ENCODE measurements at regions of chr5 and their contacts with region 1.

Region 1: GRCh38 chr5:74945561-74946165 is 79.5 kb upstream of the FAM169A start:
- DNase-seq: no peak
- ATAC-seq: no peak
- H3K4me3 ChIP-seq: no peak overlapping the region
- H3K27ac ChIP-seq: no peak overlapping the region
- H3K4me1 ChIP-seq: peaks cover 65% of the 10 kb centered on the region
- H3K27me3 ChIP-seq: no peaks in the 10 kb centered on the region
- CTCF ChIP-seq: no peak
- EP300 ChIP-seq: no peak
- POLR2A ChIP-seq: no peak
- RAD21 ChIP-seq: no peak

Region 2: DNA sequence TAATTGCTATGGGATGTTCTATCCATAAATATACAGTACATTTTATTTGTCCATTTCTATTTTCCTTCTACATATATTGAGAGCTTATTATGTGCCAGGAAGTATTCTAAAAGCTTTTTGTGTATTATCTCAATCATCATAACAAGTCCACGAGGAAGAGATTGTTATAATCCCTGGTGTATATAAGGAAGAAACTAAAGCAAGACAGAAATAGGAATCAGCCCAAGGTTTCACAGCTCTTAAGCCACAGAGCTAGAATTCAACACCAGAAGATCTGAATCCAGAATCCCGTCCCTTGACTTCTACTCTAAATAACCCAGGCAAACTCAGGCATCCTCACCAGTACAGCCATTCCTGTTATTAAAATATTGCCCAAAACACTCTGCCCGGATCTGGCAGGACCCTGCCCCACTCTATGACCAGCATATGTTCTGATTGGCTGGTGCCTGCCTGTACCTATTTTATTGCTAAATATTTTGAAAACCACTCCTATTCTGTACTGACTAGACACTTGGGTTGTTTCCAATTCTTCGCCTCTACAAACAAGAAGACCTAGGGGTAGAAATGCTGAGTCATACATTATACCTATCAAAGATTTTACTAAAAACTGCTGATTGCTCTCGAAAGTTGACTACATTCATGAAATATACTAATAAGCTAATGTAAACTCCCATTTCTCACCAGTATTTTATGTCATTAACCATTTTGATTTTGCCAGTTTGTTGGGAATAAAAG is 602.5 kb before region 1 on chr5:
- CTCF ChIA-PET with region 1: no interaction called
- POLR2A ChIA-PET with region 1: no interaction called
- in situ Hi-C with region 1: no loop called
- intact Hi-C with region 1: no loop called
- DNase-seq: no peak
- ATAC-seq: no peak
- H3K4me3 ChIP-seq: no peak overlapping the region
- H3K27ac ChIP-seq: no peak overlapping the region
- H3K4me1 ChIP-seq: 0 out of 2 replicates have a peak, but pooled peaks cover 6% of the 10 kb centered on the region
- H3K27me3 ChIP-seq: no peaks in the 10 kb centered on the region; a peak in 3 of 5 replicates
- CTCF ChIP-seq: no peak
- EP300 ChIP-seq: no peak
- POLR2A ChIP-seq: no peak
- RAD21 ChIP-seq: no peak

Region 3: DNA sequence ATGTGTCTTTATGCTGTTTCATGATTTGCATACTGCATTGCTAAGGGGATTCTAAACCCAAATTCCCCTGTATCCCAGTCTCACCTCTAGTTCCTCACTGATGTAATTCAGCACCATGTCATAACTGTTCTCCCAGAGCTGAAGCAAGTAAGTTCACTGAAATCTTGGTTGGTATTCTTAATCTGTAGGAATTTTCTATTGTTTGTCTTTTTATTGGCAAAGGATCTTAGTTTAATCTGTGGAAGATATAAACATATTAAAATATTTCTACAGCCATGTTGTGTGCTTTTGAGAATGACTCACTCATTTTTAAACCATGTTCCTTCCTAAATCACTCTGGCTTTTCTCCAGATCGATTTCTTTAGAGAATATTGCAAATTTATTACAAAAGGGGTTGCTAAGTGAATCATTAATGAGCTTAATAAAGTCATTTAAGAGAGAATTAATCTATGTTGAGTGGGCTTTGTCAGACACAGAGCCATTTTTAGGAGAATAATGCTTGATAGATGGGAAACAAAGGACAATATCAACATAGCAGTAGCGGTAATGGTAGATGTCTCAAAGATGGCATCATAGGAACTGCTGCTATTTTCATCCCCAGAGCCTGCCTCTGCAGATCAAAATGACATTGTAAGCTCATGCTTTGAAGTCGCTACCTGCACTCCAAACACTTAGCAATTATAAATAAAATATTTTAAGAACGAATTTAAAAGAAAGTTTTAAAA is 415.2 kb before region 1 on chr5:
- CTCF ChIA-PET with region 1: no interaction called
- POLR2A ChIA-PET with region 1: no interaction called
- in situ Hi-C with region 1: no loop called
- intact Hi-C with region 1: no loop called
- DNase-seq: no peak
- ATAC-seq: no peak
- H3K4me3 ChIP-seq: no peak overlapping the region
- H3K27ac ChIP-seq: no peak overlapping the region
- H3K4me1 ChIP-seq: no peaks in the 10 kb centered on the region
- H3K27me3 ChIP-seq: no peaks in the 10 kb centered on the region
- CTCF ChIP-seq: no peak
- EP300 ChIP-seq: no peak
- POLR2A ChIP-seq: no peak
- RAD21 ChIP-seq: no peak

Region 4: GRCh38 chr5:74673011-74673790 is 272.5 kb before region 1 on chr5:
- CTCF ChIA-PET with region 1: interaction called, 7 read pairs
- POLR2A ChIA-PET with region 1: no interaction called
- in situ Hi-C with region 1: no loop called
- intact Hi-C with region 1: loop called (anchors 10 kb)
- DNase-seq: peak; percentile 29
- ATAC-seq: peak; percentile 47
- H3K4me3 ChIP-seq: no peak overlapping the region
- H3K27ac ChIP-seq: no peak overlapping the region
- H3K4me1 ChIP-seq: peaks cover 52% of the 10 kb centered on the region
- H3K27me3 ChIP-seq: no peaks in the 10 kb centered on the region
- CTCF ChIP-seq: peak; percentile 58
- EP300 ChIP-seq: no peak
- POLR2A ChIP-seq: no peak
- RAD21 ChIP-seq: peak; percentile 45; the same call in 1 of the 2 replicates

Region 5: GRCh38 chr5:74895906-74896305 is 49.8 kb before region 1 on chr5:
- CTCF ChIA-PET with region 1: no interaction called
- POLR2A ChIA-PET with region 1: no interaction called
- in situ Hi-C with region 1: no loop called
- intact Hi-C with region 1: no loop called
- DNase-seq: no peak
- ATAC-seq: no peak
- H3K4me3 ChIP-seq: no peak overlapping the region
- H3K27ac ChIP-seq: no peak overlapping the region
- H3K4me1 ChIP-seq: no peaks in the 10 kb centered on the region
- H3K27me3 ChIP-seq: no peaks in the 10 kb centered on the region
- CTCF ChIP-seq: no peak
- EP300 ChIP-seq: no peak
- POLR2A ChIP-seq: no peak
- RAD21 ChIP-seq: no peak

Measured in HepG2 (cell line).